HepG2 (cell line): ENCODE measurements at regions of chr7 and their contacts with region 1.

Region 1: DNA sequence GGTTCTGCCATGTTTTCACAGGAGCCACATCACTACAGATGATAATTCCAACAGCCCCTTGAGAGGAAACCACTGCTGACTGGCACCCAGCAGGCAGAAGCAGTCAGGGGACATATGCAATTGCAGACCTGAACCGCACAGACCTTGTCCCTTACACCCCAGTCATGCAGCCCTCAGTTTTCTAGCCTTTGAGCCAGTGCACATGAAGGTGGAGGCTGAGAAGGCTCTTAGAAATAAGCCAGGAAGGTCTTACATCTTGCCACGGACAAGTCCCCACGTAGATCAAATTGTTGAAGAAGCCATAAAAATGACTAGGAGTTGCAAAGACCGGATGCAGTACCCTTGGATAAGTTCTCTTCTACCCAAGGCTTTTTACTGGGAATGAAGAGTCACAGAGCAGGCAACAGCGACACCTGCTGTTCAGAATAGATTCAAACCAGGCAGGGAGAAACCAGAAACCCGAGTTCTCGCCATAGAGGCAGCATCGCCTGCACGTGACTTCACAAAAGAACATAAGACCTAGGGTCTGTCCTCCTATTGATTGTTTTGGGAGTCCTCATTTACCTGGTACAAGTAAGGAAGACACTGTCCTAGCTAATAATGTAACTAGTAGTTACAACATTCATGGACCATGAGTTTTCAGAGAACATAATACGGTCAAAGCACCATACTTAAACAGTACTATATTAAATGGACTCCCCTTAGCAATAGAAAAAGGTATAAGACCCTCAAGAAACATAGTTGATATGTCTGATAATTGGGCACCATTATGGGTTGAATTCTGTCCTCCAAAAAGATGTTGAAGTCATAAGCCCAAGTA is 11.1 kb downstream of the STEAP1B start:
- DNase-seq: peak; percentile 60
- ATAC-seq: peak; percentile 92
- H3K4me3 ChIP-seq: no peak overlapping the region
- H3K27ac ChIP-seq: no peak overlapping the region
- H3K4me1 ChIP-seq: no peaks in the 10 kb centered on the region
- H3K27me3 ChIP-seq: peaks cover 0 to 13% of the 10 kb centered on the region in 2 experiments; a peak in 1 of 5 replicates
- CTCF ChIP-seq: peak; percentile 89
- EP300 ChIP-seq: no peak
- POLR2A ChIP-seq: no peak
- RAD21 ChIP-seq: peak; percentile 88

Region 2: GRCh38 chr7:22103255-22103969 is 385.4 kb before region 1 on chr7:
- CTCF ChIA-PET with region 1: interaction called, 16 read pairs
- POLR2A ChIA-PET with region 1: no interaction called
- in situ Hi-C with region 1: loop called (anchors 5 kb)
- intact Hi-C with region 1: loop called (anchors 1 kb)
- DNase-seq: peak; percentile 64
- ATAC-seq: peak; percentile 75
- H3K4me3 ChIP-seq: no peak overlapping the region
- H3K27ac ChIP-seq: no peak overlapping the region
- H3K4me1 ChIP-seq: no peaks in the 10 kb centered on the region
- H3K27me3 ChIP-seq: peaks cover 0 to 14% of the 10 kb centered on the region in 2 experiments; a peak in 2 of 5 replicates
- CTCF ChIP-seq: peak; percentile 76
- EP300 ChIP-seq: no peak
- POLR2A ChIP-seq: no peak
- RAD21 ChIP-seq: peak; percentile 51

Region 3: GRCh38 chr7:22110227-22110839 is 378.5 kb before region 1 on chr7:
- CTCF ChIA-PET with region 1: interaction called, 40 read pairs
- POLR2A ChIA-PET with region 1: no interaction called
- in situ Hi-C with region 1: no loop called
- intact Hi-C with region 1: loop called (anchors 1 kb)
- DNase-seq: peak; percentile 81
- ATAC-seq: peak; percentile 65
- H3K4me3 ChIP-seq: no peak overlapping the region
- H3K27ac ChIP-seq: peak overlapping the region; percentile 5
- H3K4me1 ChIP-seq: peaks cover 11% of the 10 kb centered on the region
- H3K27me3 ChIP-seq: no peaks in the 10 kb centered on the region
- CTCF ChIP-seq: peak; percentile 81
- EP300 ChIP-seq: no peak
- POLR2A ChIP-seq: no peak
- RAD21 ChIP-seq: peak; percentile 63

Region 4: GRCh38 chr7:22295402-22296264 is 193.2 kb before region 1 on chr7:
- CTCF ChIA-PET with region 1: no interaction called
- POLR2A ChIA-PET with region 1: no interaction called
- in situ Hi-C with region 1: no loop called
- intact Hi-C with region 1: loop called (anchors 5 kb)
- DNase-seq: no peak
- ATAC-seq: no peak
- H3K4me3 ChIP-seq: no peak overlapping the region
- H3K27ac ChIP-seq: no peak overlapping the region
- H3K4me1 ChIP-seq: no peaks in the 10 kb centered on the region
- H3K27me3 ChIP-seq: no peaks in the 10 kb centered on the region
- CTCF ChIP-seq: no peak
- EP300 ChIP-seq: no peak
- POLR2A ChIP-seq: no peak
- RAD21 ChIP-seq: no peak